ENCODE measurements at regions of chr7 and their contacts with region 1.

Region 1: GRCh38 chr7:19117091-19117869 is at the start of gene TWIST1:
- DNase-seq: peak in 1 of 9 donors; percentile 31
- ATAC-seq: no peak
- H3K4me3 ChIP-seq: no peak within 1 kb of the TSS
- H3K4me3 Mint-ChIP-seq: peak within 1 kb of the TSS in 2 of 10 donors; percentile 52 to 69
- H3K27ac ChIP-seq: no peak within 1 kb of the TSS
- H3K27ac Mint-ChIP-seq: no peak within 1 kb of the TSS
- H3K4me1 ChIP-seq: no peaks in the 10 kb centered on the region
- H3K4me1 Mint-ChIP-seq: peaks cover 0 to 4% (median 3%) of the 10 kb centered on the region in 7 donors
- H3K27me3 ChIP-seq: peaks cover 5 to 26% of the 10 kb centered on the region in 2 donors
- H3K27me3 Mint-ChIP-seq: peaks cover 57 to 73% (median 71%) of the 10 kb centered on the region in 5 donors
- total RNA-seq, gene TWIST1: 3.4 TPM in 1 of 5 experiments, not detected in the others

Region 2: DNA sequence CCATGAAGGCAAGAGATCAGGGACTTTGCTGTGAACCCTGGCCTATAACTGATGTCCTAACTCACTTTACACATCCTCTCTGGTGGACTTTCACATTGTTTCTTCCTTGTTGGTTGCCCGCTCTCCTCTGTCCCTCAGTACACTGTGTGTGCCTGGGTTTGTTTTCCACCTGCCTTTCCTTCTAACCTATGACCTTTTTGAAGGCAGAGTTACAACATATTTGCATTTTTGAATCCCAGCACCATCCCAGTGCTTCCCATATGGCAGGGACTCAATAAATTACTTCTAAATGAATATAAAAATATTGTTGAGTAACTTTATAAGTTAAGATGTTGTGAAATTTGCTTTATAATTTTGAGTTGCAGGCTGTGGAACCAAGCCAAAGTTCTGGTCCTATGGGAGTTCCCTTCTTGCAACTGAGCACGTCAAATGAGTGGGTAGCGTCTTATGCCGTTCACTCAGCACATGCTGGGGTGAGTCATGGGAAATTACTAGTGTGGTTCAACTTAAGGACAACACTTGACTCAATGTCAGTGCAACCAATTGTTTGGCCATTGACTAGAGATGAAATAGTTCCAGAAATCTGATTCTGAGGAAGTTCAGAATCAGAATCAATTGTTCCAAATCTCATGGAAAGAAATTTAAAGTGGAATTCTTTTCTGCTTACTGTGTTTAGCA is 250.8 kb before region 1 on chr7:
- CTCF ChIA-PET with region 1: no interaction called
- POLR2A ChIA-PET with region 1: no interaction called
- intact Hi-C with region 1: loop called in 1 of 2 experiments (anchors 5 kb)
- DNase-seq: peak in 1 of 9 donors; percentile 25
- ATAC-seq: no peak
- H3K4me3 ChIP-seq: no peak overlapping the region
- H3K4me3 Mint-ChIP-seq: no peak overlapping the region
- H3K27ac ChIP-seq: no peak overlapping the region
- H3K27ac Mint-ChIP-seq: no peak overlapping the region
- H3K4me1 ChIP-seq: no peaks in the 10 kb centered on the region
- H3K4me1 Mint-ChIP-seq: peaks cover 0 to 6% (median 0%) of the 10 kb centered on the region in 7 donors
- H3K27me3 ChIP-seq: no peaks in the 10 kb centered on the region
- H3K27me3 Mint-ChIP-seq: no peaks in the 10 kb centered on the region

Region 3: GRCh38 chr7:20786779-20787659 is 1669.7 kb after region 1 on chr7 and contains the start of gene SP8:
- CTCF ChIA-PET with region 1: no interaction called
- POLR2A ChIA-PET with region 1: no interaction called
- intact Hi-C with region 1: loop called in 1 of 2 experiments (anchors 5 kb)
- DNase-seq: peak in 1 of 9 donors; percentile 12
- ATAC-seq: peak; percentile 10
- H3K4me3 ChIP-seq: no peak within 1 kb of the TSS
- H3K4me3 Mint-ChIP-seq: peak within 1 kb of the TSS; percentile 69 to 86 (median 80)
- H3K27ac ChIP-seq: no peak within 1 kb of the TSS
- H3K27ac Mint-ChIP-seq: peak within 1 kb of the TSS in 5 of 9 donors; percentile 19 to 81 (median 53)
- H3K4me1 ChIP-seq: no peaks in the 10 kb centered on the region
- H3K4me1 Mint-ChIP-seq: peaks cover 17 to 36% (median 26%) of the 10 kb centered on the region in 7 donors
- H3K27me3 ChIP-seq: peaks cover 0 to 47% of the 10 kb centered on the region in 2 donors
- H3K27me3 Mint-ChIP-seq: peaks cover 75 to 86% (median 81%) of the 10 kb centered on the region in 5 donors
- total RNA-seq, gene SP8: not detected

Region 4: DNA sequence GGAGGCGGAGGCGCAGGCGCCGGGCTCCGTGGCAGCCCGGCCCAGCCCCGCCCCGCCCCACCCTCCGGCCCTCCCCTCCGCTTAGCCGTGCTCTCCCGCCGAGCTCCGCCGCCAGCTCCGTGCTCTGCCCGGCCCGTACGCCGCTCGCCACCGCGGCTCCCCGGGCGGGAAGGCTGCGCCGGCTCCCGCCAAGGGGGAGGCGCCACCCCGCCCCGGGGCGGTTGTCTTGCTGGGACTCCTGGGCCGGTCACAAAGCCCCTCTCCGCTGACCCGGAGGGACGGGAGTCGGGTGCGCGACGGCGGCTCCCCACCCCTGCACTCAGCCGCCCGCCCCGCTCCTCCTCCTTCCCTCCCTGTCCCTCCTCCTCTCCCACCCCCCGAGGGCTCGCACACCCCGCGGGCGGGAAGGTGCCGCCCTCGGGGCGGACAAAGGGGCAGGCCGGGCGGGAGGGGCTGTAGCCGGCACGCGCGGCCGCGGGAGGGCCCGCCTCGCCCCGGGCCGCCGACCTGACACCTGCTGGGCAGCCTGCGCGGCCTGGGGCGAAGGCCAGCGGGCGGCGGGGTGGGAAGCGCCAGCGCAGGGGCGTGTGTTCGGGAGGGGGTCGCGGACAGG is 1680.9 kb after region 1 on chr7:
- CTCF ChIA-PET with region 1: no interaction called
- POLR2A ChIA-PET with region 1: no interaction called
- intact Hi-C with region 1: loop called in 1 of 2 experiments (anchors 5 kb)
- DNase-seq: no peak
- ATAC-seq: peak; percentile 69
- H3K4me3 ChIP-seq: no peak overlapping the region
- H3K4me3 Mint-ChIP-seq: peak overlapping the region in 5 of 10 donors; percentile 69 to 88 (median 81)
- H3K27ac ChIP-seq: no peak overlapping the region
- H3K27ac Mint-ChIP-seq: no peak overlapping the region
- H3K4me1 ChIP-seq: peaks cover 7 to 13% of the 10 kb centered on the region in 2 donors
- H3K4me1 Mint-ChIP-seq: peaks cover 13 to 22% (median 20%) of the 10 kb centered on the region in 7 donors
- H3K27me3 ChIP-seq: peaks cover 12 to 39% of the 10 kb centered on the region in 2 donors
- H3K27me3 Mint-ChIP-seq: peaks cover 50 to 70% (median 61%) of the 10 kb centered on the region in 5 donors

Measured in naive thymus-derived CD4-positive, alpha-beta T cell (primary cell).